T-cell (primary cell): ENCODE measurements at regions of chr1 and their contacts with region 1.

Region 1: DNA sequence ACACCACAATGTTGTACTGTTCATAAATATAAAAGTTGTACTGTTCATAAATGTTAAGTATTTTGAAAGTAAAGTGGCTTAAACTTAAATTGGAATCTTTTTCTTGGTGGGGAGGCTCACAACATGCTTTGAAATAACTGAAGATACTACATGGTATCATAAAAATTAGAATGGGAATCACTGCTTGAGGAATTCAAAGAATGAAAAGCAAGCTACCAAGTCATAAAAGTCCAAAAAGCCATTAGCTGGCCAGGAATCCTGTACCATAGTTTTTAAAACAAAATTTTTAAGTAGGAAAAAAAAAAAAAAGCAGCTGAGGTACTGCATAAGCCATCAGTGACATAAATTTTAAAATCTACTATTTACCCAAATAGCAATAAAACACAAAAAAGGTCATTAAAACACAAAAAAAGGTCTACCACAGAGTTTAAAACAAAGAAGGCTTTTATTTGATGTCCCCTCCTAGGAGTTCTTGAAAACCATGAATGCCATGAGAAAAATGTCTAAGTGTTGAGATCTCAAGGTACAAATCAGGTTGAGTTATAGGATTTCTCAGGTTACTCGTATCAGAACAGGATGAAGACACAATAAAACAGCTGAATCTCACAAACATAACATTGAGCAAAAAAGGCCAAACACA is 8.6 kb downstream of the ZZZ3 start:
- DNase-seq: no peak
- ATAC-seq: no peak
- H3K4me3 ChIP-seq: no peak overlapping the region
- H3K4me3 Mint-ChIP-seq: no peak overlapping the region
- H3K27ac ChIP-seq: no peak overlapping the region
- H3K27ac Mint-ChIP-seq: no peak overlapping the region
- H3K4me1 ChIP-seq: peaks cover 7% of the 10 kb centered on the region in 2 experiments
- H3K4me1 Mint-ChIP-seq: peaks cover 55 to 77% (median 76%) of the 10 kb centered on the region in 3 donors
- H3K27me3 ChIP-seq: no peaks in the 10 kb centered on the region
- H3K27me3 Mint-ChIP-seq: no peaks in the 10 kb centered on the region

Region 2: GRCh38 chr1:77047978-77048614 is 625.7 kb before region 1 on chr1:
- CTCF ChIA-PET with region 1: no interaction called
- POLR2A ChIA-PET with region 1: interaction called in 1 of 2 experiments, 12 read pairs
- DNase-seq: no peak
- ATAC-seq: peak in 3 of 4 experiments; percentile 29 to 52 (median 43)
- H3K4me3 ChIP-seq: no peak overlapping the region
- H3K4me3 Mint-ChIP-seq: peak overlapping the region in 2 of 3 donors; percentile 0 to 56
- H3K27ac ChIP-seq: no peak overlapping the region
- H3K27ac Mint-ChIP-seq: no peak overlapping the region
- H3K4me1 ChIP-seq: peaks cover 6 to 19% of the 10 kb centered on the region in 2 experiments
- H3K4me1 Mint-ChIP-seq: peaks cover 19 to 23% (median 21%) of the 10 kb centered on the region in 3 donors
- H3K27me3 ChIP-seq: peaks cover 0 to 5% of the 10 kb centered on the region in 2 experiments
- H3K27me3 Mint-ChIP-seq: no peaks in the 10 kb centered on the region